Esophagus squamous epithelium (tissue), 5 donors: ENCODE measurements at regions of chr12 and their contacts with region 1.

Region 1: DNA sequence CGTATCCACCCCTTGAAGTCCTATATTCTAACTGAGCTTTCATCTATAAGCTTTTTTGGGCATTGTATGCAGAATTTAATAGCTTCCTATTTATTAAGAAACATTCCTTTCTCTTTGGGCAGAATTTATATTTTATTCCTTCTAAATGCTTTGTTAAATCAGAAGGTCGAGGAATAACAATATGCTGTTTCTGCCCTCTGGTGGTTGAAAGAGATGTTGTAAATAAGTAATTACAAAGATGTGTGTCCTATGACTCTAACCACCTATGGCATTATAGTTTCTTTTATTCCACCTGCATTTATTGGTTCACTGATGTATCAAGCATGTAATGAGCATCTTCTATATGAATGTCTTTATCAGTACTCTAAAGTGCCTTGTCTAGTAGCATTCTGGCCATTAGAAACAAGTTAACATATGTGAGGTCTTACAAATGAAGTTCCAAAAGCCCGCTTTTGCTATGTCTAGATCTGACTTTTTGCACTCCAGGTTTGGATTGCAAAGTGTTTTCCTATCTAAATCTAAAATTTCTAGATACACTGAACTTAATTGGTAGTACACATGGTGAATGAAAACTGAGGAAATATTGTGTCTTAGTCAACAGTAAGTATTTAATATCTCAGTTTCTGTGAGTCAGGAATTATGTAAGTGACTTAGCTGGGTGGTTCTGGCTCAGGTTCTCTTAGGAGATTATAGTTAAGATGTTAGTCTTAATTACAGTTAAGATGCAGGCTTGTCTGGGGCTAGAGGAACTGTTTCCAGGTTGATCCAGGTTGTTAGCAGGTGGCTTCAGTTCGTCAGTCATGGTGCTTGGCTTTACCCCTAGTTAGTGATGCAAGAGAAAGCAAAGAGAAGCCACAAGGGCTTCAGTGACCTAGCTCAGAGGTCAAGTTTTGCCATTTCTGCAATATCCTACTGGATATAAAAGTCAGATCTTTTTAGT is 57.5 kb downstream of the PLEKHA5 start:
- DNase-seq: no peak
- H3K4me3 ChIP-seq: no peak overlapping the region
- H3K27ac ChIP-seq: peak overlapping the region in 1 of 4 donors; percentile 49
- H3K4me1 ChIP-seq: peaks cover 4 to 68% (median 21%) of the 10 kb centered on the region in 3 donors
- H3K27me3 ChIP-seq: no peaks in the 10 kb centered on the region
- CTCF ChIP-seq: peak; percentile 19 to 78 (median 58)
- POLR2A ChIP-seq: no peak

Region 2: GRCh38 chr12:18683327-18684013 is 503.5 kb before region 1 on chr12:
- intact Hi-C with region 1: no loop called
- DNase-seq: no peak
- H3K4me3 ChIP-seq: no peak overlapping the region
- H3K27ac ChIP-seq: no peak overlapping the region
- H3K4me1 ChIP-seq: no peaks in the 10 kb centered on the region
- H3K27me3 ChIP-seq: no peaks in the 10 kb centered on the region
- CTCF ChIP-seq: no peak
- POLR2A ChIP-seq: no peak

Region 3: DNA sequence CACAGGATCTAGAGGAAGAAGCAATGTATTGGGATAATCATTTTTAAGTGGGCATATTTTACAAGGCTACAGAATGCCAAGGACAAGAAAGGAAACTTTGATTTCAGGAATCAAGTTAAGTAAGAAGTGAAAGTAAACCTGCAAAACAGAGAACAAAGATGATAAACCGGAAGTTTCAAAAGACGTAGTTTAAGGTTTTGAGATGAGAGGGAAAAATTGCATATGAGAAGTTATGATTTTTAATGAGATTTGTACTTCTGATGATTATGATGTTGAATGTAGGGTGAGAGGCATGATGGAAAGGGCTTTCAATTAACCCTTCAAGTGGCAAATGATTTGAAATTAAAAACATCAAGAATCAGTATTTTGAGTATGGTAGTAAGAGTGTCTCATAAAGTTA is 314.2 kb before region 1 on chr12:
- intact Hi-C with region 1: loop called (anchors 10 kb)
- DNase-seq: no peak
- H3K4me3 ChIP-seq: no peak overlapping the region
- H3K27ac ChIP-seq: no peak overlapping the region
- H3K4me1 ChIP-seq: peaks cover 0 to 10% (median 0%) of the 10 kb centered on the region in 3 donors
- H3K27me3 ChIP-seq: no peaks in the 10 kb centered on the region
- CTCF ChIP-seq: no peak
- POLR2A ChIP-seq: no peak